RWPE1 (cell line): ENCODE measurements at regions of chr10 and their contacts with region 1.

Region 1: GRCh38 chr10:132054564-132054963 is 11.2 kb upstream of the JAKMIP3 start:
- DNase-seq: peak; percentile 31
- H3K27ac ChIP-seq: no peak overlapping the region
- CTCF ChIP-seq: no peak

Region 2: DNA sequence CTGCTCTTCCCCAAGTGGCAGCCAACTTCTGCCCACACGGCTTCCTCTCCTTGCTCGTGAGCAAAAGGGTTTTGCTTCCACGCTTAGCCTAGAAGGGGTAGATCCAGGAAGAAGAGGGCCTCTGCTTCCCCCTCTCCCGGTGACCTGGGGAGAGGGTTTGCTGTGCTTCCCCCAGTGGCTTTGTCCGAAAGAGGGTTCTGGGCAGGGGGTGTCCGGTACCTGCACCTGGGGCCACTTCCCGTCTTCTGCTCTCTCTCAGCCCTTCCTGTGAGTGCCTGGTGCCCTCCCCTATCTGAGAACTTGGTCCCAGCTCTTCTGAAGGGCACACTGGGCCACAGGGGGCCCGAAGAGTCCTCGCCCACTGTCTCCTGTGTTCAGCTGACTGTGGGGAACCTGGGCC is 22.5 kb after region 1 on chr10:
- CTCF ChIA-PET with region 1: no interaction called
- POLR2A ChIA-PET with region 1: interaction called, 13 read pairs
- DNase-seq: no peak
- H3K27ac ChIP-seq: no peak overlapping the region
- CTCF ChIP-seq: no peak

Region 3: GRCh38 chr10:132156382-132156781 is 101.8 kb after region 1 on chr10:
- CTCF ChIA-PET with region 1: no interaction called
- POLR2A ChIA-PET with region 1: no interaction called
- DNase-seq: no peak
- H3K27ac ChIP-seq: no peak overlapping the region
- CTCF ChIP-seq: no peak

Region 4: DNA sequence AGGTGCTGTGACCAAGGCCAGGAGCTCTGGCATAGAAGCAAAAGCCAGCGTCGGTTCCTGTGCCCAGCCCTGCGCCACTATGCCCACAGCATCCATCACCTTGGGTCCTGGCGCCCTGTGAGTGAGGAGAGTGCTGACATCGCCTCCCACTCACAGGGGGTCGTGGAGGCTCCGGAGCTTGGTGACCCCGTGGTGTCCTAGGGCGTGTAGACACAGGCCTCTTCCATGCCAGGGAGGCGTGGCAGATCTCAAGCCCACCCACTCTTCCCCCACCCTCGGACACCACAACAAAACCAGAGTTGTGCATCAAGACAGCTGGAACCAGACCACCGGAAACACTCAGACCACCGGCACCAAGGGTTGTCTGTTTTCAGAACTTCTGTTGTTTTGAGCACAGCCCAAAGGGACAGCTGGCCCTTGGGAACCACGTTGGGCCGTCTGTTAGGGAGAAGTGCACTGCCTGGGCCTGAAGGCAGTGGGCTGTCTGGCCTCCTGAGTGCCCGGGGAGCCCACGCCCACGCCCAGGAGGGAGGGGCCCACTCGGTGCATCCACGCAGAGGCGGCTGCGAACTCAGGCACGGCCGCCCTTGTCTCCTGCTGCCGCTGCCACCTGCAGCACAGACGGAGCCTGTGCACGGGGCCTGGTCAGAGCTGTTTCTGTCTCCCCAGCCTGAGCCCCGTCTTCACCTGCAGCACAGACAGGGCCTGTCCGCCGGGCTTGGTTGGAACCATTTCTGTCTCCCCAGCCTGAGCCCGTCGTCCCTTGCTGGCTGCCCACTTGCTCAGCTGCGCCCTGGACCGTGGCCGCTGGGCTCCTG is 589.4 kb after region 1 on chr10:
- CTCF ChIA-PET with region 1: no interaction called
- POLR2A ChIA-PET with region 1: no interaction called
- DNase-seq: no peak
- H3K27ac ChIP-seq: no peak overlapping the region; the same call in 1 of the 2 replicates
- CTCF ChIP-seq: no peak